ENCODE measurements at regions of chr6 and their contacts with region 1.

Region 1: DNA sequence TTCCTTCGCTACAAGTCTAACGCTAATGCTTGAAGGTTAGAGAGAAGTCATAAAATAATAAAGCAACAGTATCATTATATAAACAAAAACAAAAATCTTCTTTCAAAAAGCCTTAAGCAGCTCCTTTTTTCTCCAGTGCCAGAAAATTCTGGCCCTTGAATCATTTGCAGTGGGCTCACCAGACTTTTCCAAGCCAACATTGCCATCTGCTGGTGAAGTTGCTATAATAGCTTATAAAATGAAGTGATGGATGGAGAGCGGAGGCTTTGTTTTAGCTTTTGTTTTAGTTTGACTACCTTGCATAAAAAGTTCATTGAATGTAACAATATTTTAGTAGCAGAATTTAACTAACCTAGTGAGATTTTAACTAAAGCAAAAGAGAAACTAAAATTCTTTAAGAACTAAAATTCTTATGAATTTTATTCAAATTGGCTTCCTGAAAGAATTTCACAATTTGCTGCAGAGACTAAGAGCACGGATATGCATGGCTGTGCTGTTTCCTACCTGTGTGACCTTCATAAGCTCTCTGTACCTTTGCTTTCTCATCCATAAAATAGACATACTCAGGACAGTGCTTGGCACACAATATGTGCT is 44.8 kb upstream of the SLC2A12 start:
- DNase-seq: peak; percentile 78
- ATAC-seq: no peak
- H3K4me3 ChIP-seq: no peak overlapping the region
- H3K4me3 Mint-ChIP-seq: no peak overlapping the region
- H3K27ac ChIP-seq: no peak overlapping the region
- H3K27ac Mint-ChIP-seq: no peak overlapping the region
- H3K4me1 ChIP-seq: no peaks in the 10 kb centered on the region
- H3K4me1 Mint-ChIP-seq: peaks cover 4% of the 10 kb centered on the region
- H3K27me3 ChIP-seq: no peaks in the 10 kb centered on the region
- H3K27me3 Mint-ChIP-seq: peaks cover 18% of the 10 kb centered on the region
- CTCF ChIP-seq: peak; percentile 87

Region 2: DNA sequence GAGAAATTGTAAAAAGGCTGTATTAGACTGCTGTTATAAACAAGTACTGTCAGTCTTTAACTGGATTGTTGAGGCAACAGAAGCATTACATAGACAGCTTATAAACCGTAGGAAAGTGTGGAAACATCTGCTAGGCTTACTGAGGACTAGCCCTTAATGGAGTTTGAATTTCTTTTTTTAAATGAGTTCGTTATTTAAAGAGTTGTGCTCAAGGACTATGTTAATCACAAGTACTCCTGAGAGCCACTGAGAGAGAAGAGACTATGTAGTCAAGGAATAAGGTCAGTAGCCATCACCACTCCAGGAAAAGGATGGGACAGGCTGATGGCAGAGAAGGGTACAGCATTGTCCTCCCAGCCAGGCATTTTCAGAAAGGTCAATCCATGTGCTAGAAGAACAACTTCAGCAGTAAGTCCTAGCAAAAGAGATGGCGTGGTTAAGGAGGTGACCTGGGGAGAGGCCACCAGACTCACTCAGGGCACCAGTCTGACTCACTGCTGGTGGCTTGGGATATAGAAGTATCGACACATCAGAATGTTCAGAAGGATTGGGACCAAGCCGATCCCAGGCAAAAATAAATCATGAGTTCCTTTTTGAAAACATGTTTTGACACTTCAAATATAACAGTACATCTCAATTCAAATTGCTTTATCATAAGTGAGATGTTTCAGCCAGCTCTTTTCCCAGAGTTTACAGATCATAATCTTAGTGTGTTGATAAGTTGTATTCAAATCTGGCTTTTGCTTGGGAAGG is 1276.4 kb before region 1 on chr6:
- CTCF ChIA-PET with region 1: no interaction called
- POLR2A ChIA-PET with region 1: no interaction called
- intact Hi-C with region 1: loop called (anchors 2 kb)
- DNase-seq: peak; percentile 14
- ATAC-seq: no peak
- H3K4me3 ChIP-seq: no peak overlapping the region
- H3K4me3 Mint-ChIP-seq: no peak overlapping the region
- H3K27ac ChIP-seq: peak overlapping the region in 1 of 2 donors; percentile 55
- H3K27ac Mint-ChIP-seq: peak overlapping the region; percentile 50
- H3K4me1 ChIP-seq: peaks cover 14 to 15% of the 10 kb centered on the region in 2 donors
- H3K4me1 Mint-ChIP-seq: peaks cover 37% of the 10 kb centered on the region
- H3K27me3 ChIP-seq: no peaks in the 10 kb centered on the region
- H3K27me3 Mint-ChIP-seq: no peaks in the 10 kb centered on the region
- CTCF ChIP-seq: no peak

Region 3: GRCh38 chr6:133916650-133917151 is 180.5 kb before region 1 on chr6:
- CTCF ChIA-PET with region 1: interaction called, 466 read pairs
- POLR2A ChIA-PET with region 1: no interaction called
- intact Hi-C with region 1: no loop called
- DNase-seq: peak; percentile 71
- ATAC-seq: peak; percentile 69
- H3K4me3 ChIP-seq: no peak overlapping the region
- H3K4me3 Mint-ChIP-seq: peak overlapping the region; percentile 42
- H3K27ac ChIP-seq: no peak overlapping the region
- H3K27ac Mint-ChIP-seq: no peak overlapping the region
- H3K4me1 ChIP-seq: peaks cover 3 to 6% of the 10 kb centered on the region in 2 donors
- H3K4me1 Mint-ChIP-seq: peaks cover 4% of the 10 kb centered on the region
- H3K27me3 ChIP-seq: peaks cover 0 to 7% (median 1%) of the 10 kb centered on the region in 4 experiments
- H3K27me3 Mint-ChIP-seq: peaks cover 21% of the 10 kb centered on the region
- CTCF ChIP-seq: peak; percentile 91

Region 4: GRCh38 chr6:133966654-133967329 is 130.4 kb before region 1 on chr6:
- CTCF ChIA-PET with region 1: interaction called, 12 read pairs
- POLR2A ChIA-PET with region 1: no interaction called
- intact Hi-C with region 1: no loop called
- DNase-seq: peak; percentile 60
- ATAC-seq: peak; percentile 87
- H3K4me3 ChIP-seq: peak overlapping the region in 1 of 5 experiments; percentile 38
- H3K4me3 Mint-ChIP-seq: peak overlapping the region; percentile 58
- H3K27ac ChIP-seq: peak overlapping the region; percentile 14 to 50
- H3K27ac Mint-ChIP-seq: peak overlapping the region; percentile 70
- H3K4me1 ChIP-seq: peaks cover 19 to 27% of the 10 kb centered on the region in 2 donors
- H3K4me1 Mint-ChIP-seq: peaks cover 50% of the 10 kb centered on the region
- H3K27me3 ChIP-seq: no peaks in the 10 kb centered on the region
- H3K27me3 Mint-ChIP-seq: no peaks in the 10 kb centered on the region
- CTCF ChIP-seq: no peak

Region 5: GRCh38 chr6:134063966-134064445 is 33.2 kb before region 1 on chr6:
- CTCF ChIA-PET with region 1: interaction called, 35 read pairs
- POLR2A ChIA-PET with region 1: no interaction called
- intact Hi-C with region 1: loop called (anchors 1 kb)
- DNase-seq: peak; percentile 75
- ATAC-seq: peak; percentile 96
- H3K4me3 ChIP-seq: no peak overlapping the region
- H3K4me3 Mint-ChIP-seq: no peak overlapping the region
- H3K27ac ChIP-seq: no peak overlapping the region
- H3K27ac Mint-ChIP-seq: no peak overlapping the region
- H3K4me1 ChIP-seq: no peaks in the 10 kb centered on the region
- H3K4me1 Mint-ChIP-seq: no peaks in the 10 kb centered on the region
- H3K27me3 ChIP-seq: no peaks in the 10 kb centered on the region
- H3K27me3 Mint-ChIP-seq: no peaks in the 10 kb centered on the region
- CTCF ChIP-seq: peak; percentile 77

Region 6: GRCh38 chr6:134123666-134124208 is 26.5 kb after region 1 on chr6:
- CTCF ChIA-PET with region 1: interaction called, 17 read pairs
- POLR2A ChIA-PET with region 1: no interaction called
- intact Hi-C with region 1: no loop called
- DNase-seq: peak; percentile 63
- ATAC-seq: peak; percentile 58
- H3K4me3 ChIP-seq: no peak overlapping the region
- H3K4me3 Mint-ChIP-seq: no peak overlapping the region
- H3K27ac ChIP-seq: no peak overlapping the region
- H3K27ac Mint-ChIP-seq: no peak overlapping the region
- H3K4me1 ChIP-seq: no peaks in the 10 kb centered on the region
- H3K4me1 Mint-ChIP-seq: no peaks in the 10 kb centered on the region
- H3K27me3 ChIP-seq: no peaks in the 10 kb centered on the region
- H3K27me3 Mint-ChIP-seq: no peaks in the 10 kb centered on the region
- CTCF ChIP-seq: peak; percentile 90